CD8-positive, alpha-beta T cell (primary cell): ENCODE measurements at regions of chr5 and their contacts with region 1.

Region 1: DNA sequence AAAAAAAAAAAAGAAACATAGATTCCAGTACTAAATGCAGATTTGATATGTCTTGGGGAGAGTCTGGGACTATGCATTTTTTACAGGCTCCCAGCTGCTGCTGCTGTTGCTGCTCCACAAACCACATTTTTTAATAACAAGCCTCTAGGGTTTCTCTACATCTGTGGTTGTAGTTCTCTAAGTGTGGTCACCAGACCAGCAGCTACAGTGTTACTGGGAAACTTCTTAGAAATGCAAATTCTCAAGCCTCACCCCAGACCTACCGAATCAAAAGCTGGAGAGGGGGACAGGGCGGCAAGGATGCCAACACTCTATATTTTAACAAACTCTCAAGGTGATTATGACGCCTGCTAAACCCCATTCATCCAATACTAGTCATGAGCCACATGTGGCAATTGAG is 293.4 kb upstream of the PTGER4 start:
- DNase-seq: peak in 5 of 9 experiments; percentile 14 to 81 (median 38)
- ATAC-seq: peak; percentile 57
- H3K4me3 ChIP-seq: no peak overlapping the region
- H3K4me3 Mint-ChIP-seq: no peak overlapping the region
- H3K27ac ChIP-seq: peak overlapping the region in 1 of 2 experiments; percentile 42
- H3K27ac Mint-ChIP-seq: peak overlapping the region; percentile 45
- H3K4me1 ChIP-seq: peaks cover 50% of the 10 kb centered on the region
- H3K4me1 Mint-ChIP-seq: peaks cover 79% of the 10 kb centered on the region
- H3K27me3 ChIP-seq: no peaks in the 10 kb centered on the region
- H3K27me3 Mint-ChIP-seq: no peaks in the 10 kb centered on the region
- CTCF ChIP-seq: no peak

Region 2: DNA sequence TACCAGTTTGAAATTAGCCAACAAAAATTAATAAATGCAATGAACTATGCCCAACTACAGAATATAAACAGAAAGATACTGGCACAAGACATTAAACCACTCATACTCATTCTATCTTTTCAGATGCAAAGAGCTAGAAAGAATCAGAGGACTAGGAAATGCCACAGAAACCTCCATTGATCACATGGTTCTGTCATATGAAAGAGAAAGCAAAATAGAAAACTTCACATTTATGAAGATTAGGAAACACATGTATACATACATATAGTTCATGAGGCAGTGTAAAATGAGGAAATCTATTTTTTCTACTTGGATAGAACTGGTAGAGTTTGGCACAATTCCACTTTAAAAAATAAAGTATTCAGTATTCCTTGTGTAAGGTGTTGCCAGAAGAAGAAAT is 18.3 kb after region 1 on chr5:
- CTCF ChIA-PET with region 1: interaction called, 6 read pairs
- POLR2A ChIA-PET with region 1: interaction called, 12 read pairs
- intact Hi-C with region 1: loop called in 1 of 2 experiments (anchors 2 kb)
- DNase-seq: peak in 2 of 9 experiments; percentile 55 to 75
- ATAC-seq: peak; percentile 51
- H3K4me3 ChIP-seq: no peak overlapping the region
- H3K4me3 Mint-ChIP-seq: peak overlapping the region; percentile 23
- H3K27ac ChIP-seq: peak overlapping the region; percentile 7 to 97
- H3K27ac Mint-ChIP-seq: peak overlapping the region; percentile 84
- H3K4me1 ChIP-seq: peaks cover 55% of the 10 kb centered on the region
- H3K4me1 Mint-ChIP-seq: peaks cover 76% of the 10 kb centered on the region
- H3K27me3 ChIP-seq: no peaks in the 10 kb centered on the region
- H3K27me3 Mint-ChIP-seq: no peaks in the 10 kb centered on the region
- CTCF ChIP-seq: no peak

Region 3: DNA sequence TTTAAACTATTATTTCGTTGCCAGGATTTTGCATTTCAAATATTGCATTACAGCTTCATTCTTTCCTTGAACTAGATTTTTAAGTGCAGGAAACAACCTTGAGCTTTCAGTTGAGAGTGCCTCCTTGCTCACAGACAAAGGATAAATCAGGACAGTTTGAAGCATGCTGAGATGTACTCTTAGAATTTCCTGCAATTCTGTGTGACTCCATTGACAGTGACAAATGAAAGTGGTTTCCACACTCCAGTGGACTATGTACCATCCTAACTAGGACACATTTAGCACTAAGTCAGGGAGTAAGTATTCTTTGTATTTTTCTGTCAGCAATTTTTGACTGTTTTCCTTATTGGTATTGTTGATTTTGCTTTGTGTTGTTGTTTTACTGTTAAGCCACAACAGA is 1224.1 kb after region 1 on chr5:
- CTCF ChIA-PET with region 1: no interaction called
- POLR2A ChIA-PET with region 1: no interaction called
- intact Hi-C with region 1: no loop called
- DNase-seq: no peak
- ATAC-seq: no peak
- H3K4me3 ChIP-seq: no peak overlapping the region
- H3K4me3 Mint-ChIP-seq: no peak overlapping the region
- H3K27ac ChIP-seq: no peak overlapping the region
- H3K27ac Mint-ChIP-seq: no peak overlapping the region
- H3K4me1 ChIP-seq: no peaks in the 10 kb centered on the region
- H3K4me1 Mint-ChIP-seq: no peaks in the 10 kb centered on the region
- H3K27me3 ChIP-seq: peaks cover 0 to 4% of the 10 kb centered on the region in 2 experiments
- H3K27me3 Mint-ChIP-seq: no peaks in the 10 kb centered on the region
- CTCF ChIP-seq: no peak